ENCODE measurements at regions of chr6 and their contacts with region 1.

Region 1: GRCh38 chr6:150016324-150017185 is 8.8 kb downstream of the RAET1L start:
- DNase-seq: peak; percentile 68
- ATAC-seq: peak; percentile 80
- H3K4me3 Mint-ChIP-seq: no peak overlapping the region
- H3K27ac Mint-ChIP-seq: no peak overlapping the region
- H3K4me1 Mint-ChIP-seq: peaks cover 26% of the 10 kb centered on the region
- H3K27me3 Mint-ChIP-seq: peaks cover 69% of the 10 kb centered on the region

Region 2: GRCh38 chr6:149934249-149935156 is 82.1 kb before region 1 on chr6:
- CTCF ChIA-PET with region 1: interaction called, 17 read pairs
- POLR2A ChIA-PET with region 1: no interaction called
- DNase-seq: peak; percentile 84
- ATAC-seq: peak; percentile 52
- H3K4me3 Mint-ChIP-seq: no peak overlapping the region
- H3K27ac Mint-ChIP-seq: peak overlapping the region; percentile 9
- H3K4me1 Mint-ChIP-seq: peaks cover 20% of the 10 kb centered on the region
- H3K27me3 Mint-ChIP-seq: peaks cover 79% of the 10 kb centered on the region

Region 3: GRCh38 chr6:149941583-149942431 is 74.7 kb before region 1 on chr6 and contains the start of gene ULBP2:
- CTCF ChIA-PET with region 1: interaction called, 10 read pairs
- POLR2A ChIA-PET with region 1: no interaction called
- DNase-seq: peak; percentile 91
- ATAC-seq: peak; percentile 88
- H3K4me3 Mint-ChIP-seq: peak within 1 kb of the TSS; percentile 88
- H3K27ac Mint-ChIP-seq: peak within 1 kb of the TSS; percentile 84
- H3K4me1 Mint-ChIP-seq: peaks cover 43% of the 10 kb centered on the region
- H3K27me3 Mint-ChIP-seq: peaks cover 61% of the 10 kb centered on the region
- total RNA-seq, gene ULBP2: 0.40 to 0.60 TPM

Region 4: DNA sequence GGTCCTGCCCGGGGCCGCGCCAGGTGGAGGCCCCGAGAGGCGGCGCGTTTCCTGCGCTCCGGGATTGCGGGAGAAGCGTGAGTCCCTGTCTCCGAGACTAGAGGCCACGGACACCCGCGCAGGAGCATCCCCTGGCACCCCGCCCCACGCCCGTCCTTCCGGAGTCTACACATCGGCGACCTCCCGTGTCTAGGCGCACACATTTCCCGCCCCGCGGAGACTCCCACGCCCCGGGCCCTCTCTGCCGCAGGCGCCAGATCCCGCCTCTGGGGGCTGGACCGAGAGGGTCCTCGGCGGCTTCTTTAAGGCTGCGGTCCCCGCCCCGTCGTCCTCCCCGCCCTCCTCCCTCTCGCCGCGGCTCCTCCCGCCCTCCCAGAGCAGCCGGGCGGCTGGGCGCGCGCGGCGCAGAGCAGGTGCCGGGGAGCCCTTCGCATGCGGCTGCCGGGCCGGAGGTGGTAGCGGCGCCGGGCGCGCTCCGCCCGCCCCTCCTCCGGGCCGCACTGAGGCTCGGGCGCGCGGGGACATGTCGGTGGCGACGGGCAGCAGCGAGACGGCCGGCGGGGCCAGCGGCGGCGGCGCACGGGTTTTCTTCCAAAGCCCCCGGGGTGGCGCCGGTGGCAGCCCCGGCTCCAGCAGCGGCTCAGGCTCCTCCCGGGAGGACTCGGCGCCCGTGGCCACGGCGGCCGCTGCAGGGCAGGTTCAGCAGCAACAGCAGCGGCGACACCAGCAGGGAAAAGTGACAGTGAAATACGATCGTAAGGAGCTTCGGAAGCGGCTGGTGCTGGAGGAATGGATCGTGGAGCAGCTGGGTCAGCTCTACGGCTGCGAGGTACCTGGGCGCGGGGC is 126.3 kb after region 1 on chr6 and contains the start of gene PPP1R14C:
- CTCF ChIA-PET with region 1: no interaction called
- POLR2A ChIA-PET with region 1: no interaction called
- DNase-seq: peak; percentile 25
- ATAC-seq: peak; percentile 74
- H3K4me3 Mint-ChIP-seq: peak within 1 kb of the TSS; percentile 38
- H3K27ac Mint-ChIP-seq: no peak within 1 kb of the TSS
- H3K4me1 Mint-ChIP-seq: peaks cover 11% of the 10 kb centered on the region
- H3K27me3 Mint-ChIP-seq: peaks cover 72% of the 10 kb centered on the region
- total RNA-seq, gene PPP1R14C: not detected

Measured in activated CD8-positive, alpha-beta T cell treated with anti-CD3 and anti-CD28 coated beads, Interleukin-2, amount 10 ng/mL, durations not matched to agents 7 days and 5 days (primary cell).